Colonic mucosa (tissue), 4 donors: ENCODE measurements at regions of chr3 and their contacts with region 1.

Region 1: DNA sequence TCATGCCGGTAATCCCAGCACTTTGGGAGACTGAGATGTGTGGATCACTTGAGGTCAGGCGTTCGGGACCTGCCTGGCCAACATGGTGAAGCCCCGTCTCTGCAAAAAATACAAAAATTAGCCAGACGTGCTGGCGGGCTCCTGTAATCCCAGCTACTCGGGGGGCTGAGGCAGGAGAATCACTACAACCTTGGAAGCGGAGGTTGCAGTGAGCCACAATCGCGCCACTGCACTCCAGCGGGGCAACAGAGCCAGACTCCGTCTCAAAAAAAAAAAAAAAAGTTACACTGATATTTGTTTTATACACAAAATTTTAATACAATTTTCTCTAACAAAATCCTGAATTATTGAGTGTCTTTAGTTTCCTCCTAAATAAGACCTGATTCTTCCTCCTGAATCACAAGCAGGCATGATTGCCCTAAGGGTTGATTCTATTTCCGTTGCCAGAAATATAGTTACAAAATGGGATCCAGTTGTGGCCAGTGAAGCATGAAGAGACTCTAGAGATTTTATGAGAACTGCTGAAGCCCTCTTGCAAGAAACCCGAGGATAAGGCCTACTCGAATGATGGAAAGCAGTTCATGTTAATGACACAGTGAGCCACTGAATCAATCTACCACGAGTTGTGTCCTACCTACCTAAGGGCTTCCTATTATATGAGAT is 9.6 kb upstream of the SMARCC1 start:
- DNase-seq: no peak
- H3K4me3 ChIP-seq: no peak overlapping the region
- H3K27ac ChIP-seq: no peak overlapping the region
- H3K4me1 ChIP-seq: no peaks in the 10 kb centered on the region
- H3K27me3 ChIP-seq: no peaks in the 10 kb centered on the region
- CTCF ChIP-seq: no peak

Region 2: DNA sequence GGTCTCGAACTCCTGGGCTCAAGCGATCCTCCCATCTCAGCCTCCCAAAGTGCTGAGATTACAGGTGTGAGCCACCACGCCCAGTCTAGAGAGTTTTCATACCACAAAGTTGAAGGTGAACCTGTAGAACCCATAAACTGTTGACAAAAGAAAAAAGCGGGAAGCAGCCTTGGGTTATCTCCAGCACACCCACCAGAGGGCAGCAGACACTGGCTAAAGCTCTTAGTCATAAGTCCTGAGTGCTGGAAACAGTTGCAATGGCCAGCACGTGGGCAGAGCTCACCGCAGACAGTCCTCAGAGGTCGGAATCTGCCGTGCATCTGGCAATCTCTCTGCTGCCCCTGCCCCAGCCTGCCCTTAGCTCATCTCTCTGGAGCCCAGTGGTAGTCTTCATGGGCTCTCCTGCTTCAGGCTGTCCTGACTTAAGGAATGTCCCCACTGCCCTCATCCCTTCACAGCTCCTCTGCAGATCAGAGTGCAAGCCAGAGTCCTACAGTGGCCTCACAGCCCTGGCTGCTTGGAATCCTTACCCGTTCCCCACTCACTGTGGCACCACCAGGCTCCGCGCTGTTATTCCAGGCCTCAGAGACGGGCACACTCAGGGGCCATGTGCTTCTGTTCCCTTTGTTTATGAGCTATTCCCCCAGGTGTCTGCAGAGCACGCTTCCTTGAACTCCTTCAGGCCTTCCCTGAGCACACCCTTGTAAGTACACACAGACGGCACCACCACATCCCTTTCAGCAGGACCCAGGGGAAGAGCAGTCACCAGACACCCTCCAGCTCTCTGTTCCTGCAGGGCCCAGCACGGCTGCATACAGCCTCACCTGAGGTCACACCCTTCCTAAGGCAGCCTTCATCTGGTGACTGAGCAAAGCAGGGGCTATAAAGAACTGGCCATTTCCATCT is 269.0 kb before region 1 on chr3:
- intact Hi-C with region 1: loop called (anchors 2 kb)
- DNase-seq: peak; percentile 87
- H3K4me3 ChIP-seq: no peak overlapping the region
- H3K27ac ChIP-seq: no peak overlapping the region
- H3K4me1 ChIP-seq: peaks cover 4% of the 10 kb centered on the region
- H3K27me3 ChIP-seq: no peaks in the 10 kb centered on the region
- CTCF ChIP-seq: peak; percentile 84